ENCODE measurements at regions of chr3 and their contacts with region 1.

Region 1: GRCh38 chr3:157081681-157082210 is 78.2 kb downstream of the CCNL1 start:
- DNase-seq: peak; percentile 90
- H3K4me3 ChIP-seq: no peak overlapping the region
- H3K27ac ChIP-seq: peak overlapping the region in 1 of 2 donors; percentile 56
- H3K4me1 ChIP-seq: peaks cover 0 to 2% of the 10 kb centered on the region in 2 donors
- H3K27me3 ChIP-seq: no peaks in the 10 kb centered on the region
- CTCF ChIP-seq: peak; percentile 93 to 97 (median 95)
- POLR2A ChIP-seq: peak in 1 of 2 donors; percentile 42

Region 2: DNA sequence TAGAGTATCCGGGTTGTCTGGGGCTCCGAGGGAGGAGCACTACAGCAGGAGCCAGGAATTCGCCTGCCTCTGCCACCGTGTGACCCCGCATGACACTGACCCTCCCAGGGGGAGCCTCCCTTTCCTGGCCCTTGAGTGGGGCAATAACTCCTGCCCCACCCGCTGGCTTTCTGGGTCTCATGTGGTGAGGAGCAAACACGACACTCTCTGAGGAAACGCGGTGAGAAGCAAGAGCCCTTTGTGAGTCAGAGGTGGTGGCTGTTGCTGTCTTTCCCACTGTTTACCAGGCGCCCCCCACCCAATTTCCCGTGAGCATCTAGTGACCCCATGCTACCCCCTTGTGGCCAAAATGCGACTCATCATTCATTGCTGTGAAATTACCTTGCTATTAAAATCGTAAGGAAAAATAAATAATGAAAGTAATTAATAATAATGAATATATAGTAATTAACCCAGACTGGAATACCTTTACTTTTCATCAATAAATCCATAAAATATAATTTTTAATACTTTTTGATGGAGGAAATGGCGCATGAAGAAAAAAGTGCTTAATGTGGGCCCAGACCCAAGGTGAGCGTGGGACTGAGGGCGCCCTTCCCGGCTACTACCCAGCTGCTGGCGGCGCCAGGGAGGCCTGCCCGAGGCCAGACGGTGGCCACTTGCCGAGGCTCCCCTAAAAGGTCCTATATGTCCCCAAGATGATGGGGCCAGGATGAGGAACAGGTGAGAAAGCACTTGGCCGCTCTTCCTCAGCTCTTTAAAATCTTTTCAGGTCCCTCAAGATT is 48.9 kb after region 1 on chr3:
- intact Hi-C with region 1: loop called (anchors 5 kb)
- DNase-seq: peak; percentile 46 to 59
- H3K4me3 ChIP-seq: no peak overlapping the region
- H3K27ac ChIP-seq: peak overlapping the region; percentile 86 to 88
- H3K4me1 ChIP-seq: peaks cover 8 to 22% of the 10 kb centered on the region in 2 donors
- H3K27me3 ChIP-seq: no peaks in the 10 kb centered on the region
- CTCF ChIP-seq: peak; percentile 24 to 58 (median 53)
- POLR2A ChIP-seq: no peak

Measured in uterus (tissue), 4 donors.